A549 (cell line): ENCODE measurements at regions of chr5 and their contacts with region 1.

Region 1: DNA sequence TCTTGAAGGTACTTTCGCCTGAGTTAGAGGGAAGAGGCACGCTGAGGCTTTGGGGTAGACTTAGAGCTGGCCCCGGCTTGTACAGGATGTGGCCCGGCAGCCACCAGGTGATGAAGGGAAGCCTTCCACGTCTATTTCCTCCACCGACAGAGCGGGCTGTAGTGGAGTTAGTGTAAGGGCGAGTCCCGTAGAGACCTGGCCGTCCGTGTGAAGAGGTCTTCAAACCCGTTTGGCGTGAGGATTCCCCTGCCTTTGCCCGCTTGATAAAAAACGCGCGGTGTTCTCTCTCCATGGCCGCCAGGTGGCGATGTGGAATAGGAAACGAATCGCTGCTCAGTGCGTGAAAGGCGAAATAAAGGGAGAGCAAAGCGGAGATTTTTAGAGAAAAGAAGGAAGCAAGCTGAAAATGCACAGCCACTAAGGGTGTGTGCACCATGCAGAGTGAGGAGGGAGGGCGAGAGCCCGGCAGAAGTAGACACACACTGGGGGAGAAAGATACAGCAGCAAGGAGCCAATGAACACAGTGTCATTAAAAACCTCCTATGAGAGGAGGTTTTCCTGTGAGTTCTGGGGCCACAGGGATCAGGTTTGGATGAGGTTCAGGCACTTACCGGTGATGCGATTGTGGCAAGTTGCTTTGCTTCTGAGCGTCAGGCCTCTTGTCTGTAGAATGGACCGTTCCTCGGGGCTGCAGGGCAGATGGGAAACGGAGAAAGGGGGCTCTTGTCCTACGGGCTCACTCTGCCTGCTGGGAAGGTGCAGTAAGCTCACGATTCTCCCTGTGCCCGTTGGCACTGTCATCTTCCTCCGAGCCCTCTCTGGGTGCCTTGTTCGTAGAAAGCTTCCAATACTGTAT is 34.2 kb downstream of the STC2 start:
- DNase-seq: peak; percentile 75 to 78
- ATAC-seq: peak; percentile 75 to 94
- H3K4me3 ChIP-seq: peak overlapping the region; percentile 18; the same call in 2 of the 3 replicates
- H3K27ac ChIP-seq: peak overlapping the region; percentile 60 to 74; a peak in 5 of 6 replicates
- H3K4me1 ChIP-seq: peaks cover 3% of the 10 kb centered on the region; the same call in 1 of the 3 replicates
- CTCF ChIP-seq: peak; percentile 96
- EP300 ChIP-seq: no peak
- POLR2A ChIP-seq: no peak
- RAD21 ChIP-seq: peak; percentile 98 to 99

Region 2: DNA sequence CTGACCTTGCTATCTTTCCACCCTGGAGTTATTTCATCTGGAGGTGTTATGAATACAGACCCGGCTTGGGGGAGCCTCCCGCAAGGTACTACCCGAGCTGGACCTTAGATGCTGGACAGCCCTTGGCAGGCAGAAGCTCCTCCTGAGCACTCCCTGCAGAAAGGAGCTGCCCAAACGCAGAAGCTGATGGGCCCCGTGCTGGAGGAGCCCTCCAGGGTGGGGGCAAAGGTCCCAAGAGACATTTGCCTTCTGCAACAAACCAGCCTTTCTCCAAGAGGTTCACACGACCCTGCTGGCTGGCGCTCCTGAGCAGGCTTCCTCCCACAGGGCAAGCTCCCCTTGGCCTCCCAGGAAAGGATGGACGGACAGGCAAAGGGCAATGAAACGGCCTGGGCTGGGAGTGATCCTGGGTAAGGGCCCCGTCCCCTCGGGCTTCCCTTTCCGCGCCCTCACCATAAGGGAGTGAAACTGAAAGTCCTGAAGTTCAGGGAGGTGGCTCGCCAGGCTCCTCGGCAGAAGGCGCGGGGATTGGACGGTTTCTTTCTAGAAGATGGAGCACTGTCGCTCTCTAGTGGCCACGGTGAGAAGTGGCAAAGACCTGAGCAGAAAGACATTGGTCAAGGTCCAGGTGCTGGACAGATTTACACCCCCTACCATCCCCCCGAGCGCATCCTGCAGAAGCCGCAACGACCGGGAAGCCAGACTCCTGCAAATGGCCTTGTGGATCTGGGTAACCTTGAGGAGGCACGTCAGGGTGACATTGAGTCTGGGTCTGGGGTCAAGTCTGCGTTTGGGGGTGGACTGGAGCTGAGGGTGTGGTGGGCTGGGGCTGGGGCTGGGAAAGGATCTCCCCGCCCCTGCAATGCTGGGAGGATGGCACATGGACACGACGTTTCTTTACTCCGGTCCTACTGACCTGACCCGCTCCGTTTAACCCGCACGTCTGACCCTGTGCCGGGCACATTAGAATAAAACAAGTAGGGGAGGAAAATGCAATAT is 596.6 kb before region 1 on chr5:
- CTCF ChIA-PET with region 1: no interaction called
- POLR2A ChIA-PET with region 1: no interaction called
- DNase-seq: peak; percentile 80 to 84
- ATAC-seq: peak; percentile 83 to 90
- H3K4me3 ChIP-seq: peak overlapping the region; percentile 43
- H3K27ac ChIP-seq: peak overlapping the region; percentile 67 to 81
- H3K4me1 ChIP-seq: peaks cover 8% of the 10 kb centered on the region; the same call in 2 of the 3 replicates
- CTCF ChIP-seq: peak; percentile 92
- EP300 ChIP-seq: no peak
- POLR2A ChIP-seq: no peak
- RAD21 ChIP-seq: peak; percentile 98 to 99

Region 3: DNA sequence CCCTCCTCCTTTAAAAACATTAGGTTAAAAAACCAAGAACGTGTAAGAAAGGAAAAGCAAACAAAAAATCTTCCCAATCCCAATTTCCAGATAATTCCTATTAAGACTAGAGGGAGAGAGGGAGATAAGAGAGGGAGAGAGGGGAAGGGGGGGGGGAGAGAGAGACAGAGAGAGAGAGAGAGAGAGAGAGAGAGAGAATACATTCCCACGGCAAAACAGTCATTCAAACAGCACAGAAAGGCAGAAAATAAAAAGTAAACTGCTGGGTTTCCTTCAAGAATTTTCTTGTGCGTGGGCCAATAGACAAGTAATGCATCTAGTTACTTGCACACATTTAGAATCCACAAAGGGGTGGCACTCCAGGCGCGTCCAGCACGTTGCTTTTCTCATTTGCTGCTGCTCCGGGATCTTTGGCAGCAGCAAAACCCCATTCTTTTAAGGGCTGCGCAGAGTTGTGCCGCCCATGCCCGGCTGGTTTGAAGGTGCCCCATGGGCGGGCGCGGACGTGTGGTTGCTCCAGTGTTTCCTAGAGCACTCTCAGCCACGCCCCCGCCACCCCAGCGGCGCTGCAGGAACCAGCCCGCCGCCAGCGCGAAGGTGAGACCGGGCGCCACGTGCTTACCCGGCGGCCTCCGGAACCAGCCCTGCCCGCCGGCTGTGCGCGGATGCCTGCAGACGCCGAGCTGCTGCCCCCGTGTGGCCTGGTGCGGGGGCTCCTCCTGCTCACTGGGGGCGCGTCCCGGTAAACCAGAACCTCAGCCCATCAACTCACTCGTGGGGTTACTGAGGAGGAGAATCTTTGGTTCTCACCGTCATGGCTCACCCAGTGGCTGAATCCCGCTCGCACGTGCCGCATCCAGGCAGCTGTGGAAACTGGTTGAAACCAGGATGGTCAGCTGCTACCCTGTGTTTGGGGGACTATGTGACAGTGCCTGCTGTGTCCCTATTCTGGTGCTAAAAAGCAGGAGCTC is 10.4 kb before region 1 on chr5:
- CTCF ChIA-PET with region 1: interaction called, 11 read pairs
- POLR2A ChIA-PET with region 1: no interaction called
- DNase-seq: peak; percentile 80 to 82
- ATAC-seq: peak; percentile 94 to 98
- H3K4me3 ChIP-seq: peak overlapping the region; percentile 34
- H3K27ac ChIP-seq: peak overlapping the region; percentile 69 to 79
- H3K4me1 ChIP-seq: peaks cover 4% of the 10 kb centered on the region; the same call in 1 of the 3 replicates
- CTCF ChIP-seq: peak; percentile 78
- EP300 ChIP-seq: no peak
- POLR2A ChIP-seq: no peak
- RAD21 ChIP-seq: peak; percentile 69 to 82

Region 4: DNA sequence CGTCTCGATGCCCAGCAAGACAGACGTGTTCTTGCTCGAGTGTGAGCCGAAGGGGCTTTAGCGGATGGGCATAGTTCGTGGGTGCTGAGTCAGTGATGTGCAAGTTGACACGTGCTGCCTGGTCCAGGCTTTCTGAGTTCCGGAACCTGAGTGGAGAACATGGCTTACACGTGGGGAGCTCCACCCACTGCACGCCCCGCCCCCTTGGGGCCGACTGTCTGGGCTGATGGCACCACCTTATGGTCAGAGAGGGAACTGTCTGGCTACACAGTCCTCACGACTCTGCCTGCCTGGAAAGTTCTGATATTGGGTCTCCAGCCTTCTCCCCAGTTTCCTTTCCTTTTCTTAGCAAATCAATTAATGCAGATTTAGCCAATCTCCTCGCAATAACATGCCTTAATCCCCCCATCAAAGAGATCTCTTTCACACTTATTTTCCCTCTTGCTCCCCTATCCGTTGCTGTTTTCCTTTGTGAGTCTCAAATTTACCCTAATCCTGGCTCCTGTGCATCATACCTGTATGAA is 38.0 kb after region 1 on chr5:
- CTCF ChIA-PET with region 1: interaction called, 129 read pairs
- POLR2A ChIA-PET with region 1: no interaction called
- DNase-seq: peak; percentile 79 to 87
- ATAC-seq: peak in 1 of 2 experiments; percentile 69; a peak in 3 of 6 replicates
- H3K4me3 ChIP-seq: no peak overlapping the region
- H3K27ac ChIP-seq: peak overlapping the region; percentile 88 to 97; a peak in 5 of 6 replicates
- H3K4me1 ChIP-seq: peaks cover 23% of the 10 kb centered on the region
- CTCF ChIP-seq: peak; percentile 73
- EP300 ChIP-seq: no peak
- POLR2A ChIP-seq: no peak
- RAD21 ChIP-seq: peak; percentile 84 to 93

Region 5: DNA sequence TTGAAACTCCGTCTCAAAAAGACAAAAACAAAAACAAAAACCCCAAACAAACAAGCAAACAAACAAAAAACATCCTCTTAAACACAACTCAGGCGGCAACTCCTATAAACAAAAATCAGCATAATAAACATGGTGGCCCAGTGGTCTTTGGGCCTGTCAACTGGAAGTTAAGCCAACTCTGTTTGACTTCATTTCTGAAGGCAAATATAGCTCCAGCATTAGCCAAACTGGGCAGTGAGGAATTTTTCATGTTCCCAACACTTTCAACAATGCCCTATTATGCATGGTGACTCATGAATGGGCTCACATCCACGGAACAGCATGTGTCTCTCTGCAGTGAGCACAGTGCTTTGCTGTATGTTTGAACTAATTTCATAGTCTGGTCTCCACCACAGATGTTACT is 178.1 kb after region 1 on chr5:
- CTCF ChIA-PET with region 1: interaction called, 11 read pairs
- POLR2A ChIA-PET with region 1: no interaction called
- DNase-seq: peak; percentile 40 to 73
- ATAC-seq: peak; percentile 88 to 93
- H3K4me3 ChIP-seq: no peak overlapping the region
- H3K27ac ChIP-seq: peak overlapping the region; percentile 82 to 83
- H3K4me1 ChIP-seq: peaks cover 26% of the 10 kb centered on the region
- CTCF ChIP-seq: no peak
- EP300 ChIP-seq: no peak
- POLR2A ChIP-seq: no peak
- RAD21 ChIP-seq: no peak

Region 6: DNA sequence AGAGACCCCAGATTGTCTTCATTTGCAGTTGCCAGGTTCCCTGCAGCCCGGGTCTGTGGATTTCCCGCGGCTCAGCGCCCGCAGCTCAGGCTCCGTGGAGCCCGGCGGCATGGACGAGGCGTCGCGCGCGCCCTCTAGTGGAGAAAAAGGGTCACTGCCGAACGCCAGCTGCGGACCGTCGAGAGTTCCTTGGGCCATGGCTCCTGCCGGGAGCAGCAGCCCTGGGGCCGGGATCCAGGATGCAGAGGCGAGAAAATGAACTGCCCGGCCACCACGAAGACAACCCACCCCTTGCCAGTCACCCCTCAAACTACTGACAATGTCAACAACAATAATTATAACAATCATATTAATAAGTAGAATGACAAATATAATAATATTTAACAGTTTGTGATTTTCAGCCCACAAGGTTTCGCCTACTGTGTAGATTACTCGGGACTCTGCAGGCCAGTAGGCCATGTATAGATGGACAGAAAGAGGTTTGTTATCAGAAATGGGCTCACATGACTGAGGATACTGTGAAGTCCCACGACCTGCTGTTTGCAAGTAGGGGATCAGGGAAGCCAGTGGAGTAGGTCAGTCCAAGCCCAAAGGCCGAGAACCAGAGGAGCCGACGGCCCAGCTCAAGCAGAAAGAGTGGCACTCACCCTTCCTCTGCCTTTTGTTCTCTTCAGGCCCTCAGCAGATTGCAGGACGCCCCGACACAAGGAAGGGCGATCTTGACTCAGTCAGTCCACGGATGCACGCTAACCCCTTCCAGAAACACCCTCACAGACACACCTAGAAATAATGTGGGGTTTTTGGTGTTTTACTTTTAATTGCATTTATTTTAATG is 279.3 kb after region 1 on chr5:
- CTCF ChIA-PET with region 1: interaction called, 140 read pairs
- POLR2A ChIA-PET with region 1: no interaction called
- DNase-seq: peak; percentile 55 to 66
- ATAC-seq: peak; percentile 95 to 99
- H3K4me3 ChIP-seq: no peak overlapping the region
- H3K27ac ChIP-seq: peak overlapping the region; percentile 62 to 63; a peak in 5 of 6 replicates
- H3K4me1 ChIP-seq: peaks cover 5% of the 10 kb centered on the region; the same call in 2 of the 3 replicates
- CTCF ChIP-seq: peak; percentile 92
- EP300 ChIP-seq: no peak
- POLR2A ChIP-seq: no peak
- RAD21 ChIP-seq: peak; percentile 85 to 94

Region 7: GRCh38 chr5:173615884-173616576 is 322.0 kb after region 1 on chr5:
- CTCF ChIA-PET with region 1: interaction called, 68 read pairs
- POLR2A ChIA-PET with region 1: interaction called, 6 read pairs
- DNase-seq: peak; percentile 72 to 80
- ATAC-seq: peak; percentile 79 to 80
- H3K4me3 ChIP-seq: peak overlapping the region; percentile 88
- H3K27ac ChIP-seq: peak overlapping the region; percentile 92 to 98
- H3K4me1 ChIP-seq: peaks cover 40% of the 10 kb centered on the region
- CTCF ChIP-seq: peak; percentile 53
- EP300 ChIP-seq: no peak
- POLR2A ChIP-seq: no peak; the same call in 1 of the 2 replicates
- RAD21 ChIP-seq: peak in 1 of 2 experiments; percentile 37; a peak in 3 of 5 replicates

Region 8: DNA sequence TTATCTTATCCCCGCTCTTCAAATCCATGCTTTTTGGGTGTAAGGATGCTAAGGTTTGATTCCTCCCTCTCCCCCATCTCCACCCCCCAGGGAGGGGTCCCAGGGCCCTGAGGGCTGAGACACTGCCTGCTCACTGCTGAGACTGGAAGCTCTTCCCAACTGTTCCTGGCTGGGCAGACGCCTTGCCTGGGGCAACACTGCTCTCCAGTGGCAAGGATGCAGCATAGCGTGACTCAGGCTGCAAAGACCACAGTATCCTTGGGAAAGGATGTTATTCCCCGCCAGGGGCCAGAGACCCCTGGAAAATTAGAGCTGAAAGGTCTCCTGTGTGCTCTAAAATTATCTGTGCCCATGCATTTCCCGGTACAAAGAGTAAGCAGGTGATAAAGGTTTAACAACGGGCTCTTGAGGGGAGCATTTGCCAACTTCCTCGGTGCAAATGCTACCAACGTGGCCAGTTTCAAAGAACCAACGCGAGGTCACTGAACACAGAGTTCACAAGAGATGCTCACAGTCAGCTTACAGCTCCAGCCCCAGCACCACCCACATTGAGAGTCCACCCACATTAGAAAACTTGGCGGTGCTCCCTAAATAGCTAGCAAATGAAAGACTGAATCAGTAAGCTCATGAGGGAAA is 1023.3 kb after region 1 on chr5:
- CTCF ChIA-PET with region 1: interaction called, 32 read pairs
- POLR2A ChIA-PET with region 1: no interaction called
- DNase-seq: peak; percentile 60 to 68
- ATAC-seq: peak; percentile 83 to 98
- H3K4me3 ChIP-seq: no peak overlapping the region
- H3K27ac ChIP-seq: no peak overlapping the region
- H3K4me1 ChIP-seq: no peaks in the 10 kb centered on the region
- CTCF ChIP-seq: peak; percentile 79
- EP300 ChIP-seq: no peak
- POLR2A ChIP-seq: no peak
- RAD21 ChIP-seq: peak; percentile 94 to 95